Activated B cell treated with CpG ODN at 0.5 μM for 24 hours (primary cell): ENCODE measurements at regions of chr14 and their contacts with region 1.

Region 1: DNA sequence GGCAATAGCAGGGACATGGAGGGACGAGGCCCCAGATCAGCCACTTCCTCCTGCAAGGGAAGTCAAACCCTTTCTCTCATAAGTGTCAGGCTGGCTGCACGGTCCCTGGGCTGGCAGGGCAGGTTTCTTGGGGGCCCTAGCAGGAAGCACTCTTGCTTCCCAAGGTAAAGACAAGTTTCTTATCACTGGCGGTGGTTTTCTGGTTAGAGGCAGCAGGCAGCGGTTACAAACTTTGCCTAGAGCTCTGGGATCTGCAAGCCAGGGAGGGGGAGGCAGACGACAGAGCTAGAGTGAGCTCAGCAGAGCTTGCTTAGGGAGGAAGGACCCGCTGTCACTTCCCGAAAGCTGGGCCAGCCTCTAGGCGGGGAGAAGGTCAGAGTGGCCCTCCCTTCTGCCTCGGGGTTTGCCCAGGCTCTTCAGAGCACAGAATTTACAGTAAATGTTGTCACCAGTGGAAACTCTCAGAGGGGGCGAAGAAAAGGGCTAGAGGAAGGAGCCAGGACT is 20.4 kb downstream of the BATF start:
- DNase-seq: peak; percentile 65
- ATAC-seq: peak; percentile 80
- H3K4me3 Mint-ChIP-seq: peak overlapping the region; percentile 74
- H3K27ac Mint-ChIP-seq: peak overlapping the region; percentile 99
- H3K4me1 Mint-ChIP-seq: peaks cover 78% of the 10 kb centered on the region
- H3K27me3 Mint-ChIP-seq: no peaks in the 10 kb centered on the region
- CTCF ChIP-seq: no peak

Region 2: DNA sequence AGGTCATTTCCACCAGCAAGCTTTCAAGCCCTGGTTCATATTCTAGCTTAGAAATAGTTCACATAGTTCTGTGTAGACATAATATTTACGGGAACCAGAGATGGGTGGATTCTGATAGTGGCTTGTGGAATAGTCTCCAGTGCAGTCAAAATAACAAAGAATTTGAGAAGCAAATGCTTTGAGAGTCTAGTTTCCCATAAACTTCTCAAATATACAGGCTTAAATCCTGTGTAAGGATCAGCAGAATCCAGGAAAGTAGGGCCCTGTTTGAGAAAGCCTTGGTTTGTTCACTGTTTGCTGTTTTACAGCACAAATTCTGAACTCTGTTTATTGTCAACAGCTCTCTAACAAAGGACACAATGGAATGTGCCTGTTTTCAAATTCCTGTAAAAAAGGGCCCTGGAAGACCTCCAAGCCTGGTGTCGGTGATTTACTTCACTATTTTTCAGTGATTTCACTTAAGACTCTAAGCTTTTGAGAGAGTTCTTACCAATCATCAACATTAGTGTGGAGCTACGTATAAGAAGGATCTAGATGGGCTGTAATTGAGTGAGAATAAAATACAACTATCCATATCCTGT is 275.4 kb before region 1 on chr14:
- CTCF ChIA-PET with region 1: no interaction called
- POLR2A ChIA-PET with region 1: interaction called, 14 read pairs
- intact Hi-C with region 1: no loop called
- DNase-seq: no peak
- ATAC-seq: no peak
- H3K4me3 Mint-ChIP-seq: no peak overlapping the region
- H3K27ac Mint-ChIP-seq: no peak overlapping the region
- H3K4me1 Mint-ChIP-seq: peaks cover 3% of the 10 kb centered on the region
- H3K27me3 Mint-ChIP-seq: peaks cover 4% of the 10 kb centered on the region
- CTCF ChIP-seq: no peak

Region 3: DNA sequence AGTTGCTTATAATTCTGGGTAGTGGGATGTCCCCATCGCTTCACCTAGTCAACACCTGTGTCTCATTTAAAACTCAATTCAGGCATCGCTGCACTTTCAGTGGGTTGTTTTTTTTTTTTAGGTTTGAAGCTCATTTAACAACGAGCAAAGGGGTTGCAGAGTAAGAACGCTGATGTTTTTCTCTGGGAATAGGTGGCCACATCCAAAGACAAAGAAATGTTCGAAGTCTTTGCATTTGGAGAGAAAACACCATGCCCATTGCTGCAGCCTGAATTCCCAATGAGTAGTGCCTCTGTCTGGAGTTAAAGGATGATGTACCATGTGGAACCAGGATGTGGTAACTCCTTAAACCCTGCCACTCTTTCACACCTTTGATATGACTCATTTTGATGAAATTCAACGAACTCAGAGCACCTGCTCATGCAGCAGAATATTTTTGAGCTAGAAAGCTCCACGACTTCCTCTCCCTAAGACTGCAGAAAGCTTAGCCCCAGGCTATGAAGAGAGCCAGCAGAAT is 55.4 kb before region 1 on chr14:
- CTCF ChIA-PET with region 1: interaction called, 12 read pairs
- POLR2A ChIA-PET with region 1: interaction called, 8 read pairs
- intact Hi-C with region 1: loop called (anchors 2 kb)
- DNase-seq: no peak
- ATAC-seq: peak; percentile 66
- H3K4me3 Mint-ChIP-seq: peak overlapping the region; percentile 9
- H3K27ac Mint-ChIP-seq: peak overlapping the region; percentile 42
- H3K4me1 Mint-ChIP-seq: peaks cover 22% of the 10 kb centered on the region
- H3K27me3 Mint-ChIP-seq: no peaks in the 10 kb centered on the region
- CTCF ChIP-seq: no peak

Region 4: GRCh38 chr14:75504411-75504810 is 38.2 kb before region 1 on chr14:
- CTCF ChIA-PET with region 1: no interaction called
- POLR2A ChIA-PET with region 1: no interaction called
- intact Hi-C with region 1: no loop called
- DNase-seq: no peak
- ATAC-seq: no peak
- H3K4me3 Mint-ChIP-seq: no peak overlapping the region
- H3K27ac Mint-ChIP-seq: no peak overlapping the region
- H3K4me1 Mint-ChIP-seq: peaks cover 3% of the 10 kb centered on the region
- H3K27me3 Mint-ChIP-seq: no peaks in the 10 kb centered on the region
- CTCF ChIP-seq: no peak

Region 5: GRCh38 chr14:75522224-75522982 is 20.2 kb before region 1 on chr14 and contains the start of gene BATF:
- CTCF ChIA-PET with region 1: interaction called, 8 read pairs
- POLR2A ChIA-PET with region 1: interaction called, 356 read pairs
- intact Hi-C with region 1: loop called (anchors 1 kb)
- DNase-seq: peak; percentile 58
- ATAC-seq: peak; percentile 70
- H3K4me3 Mint-ChIP-seq: peak within 1 kb of the TSS; percentile 100
- H3K27ac Mint-ChIP-seq: peak within 1 kb of the TSS; percentile 98
- H3K4me1 Mint-ChIP-seq: peaks cover 85% of the 10 kb centered on the region
- H3K27me3 Mint-ChIP-seq: no peaks in the 10 kb centered on the region
- CTCF ChIP-seq: no peak
- total RNA-seq, gene BATF: 160 and 171 TPM in 2 replicates

Region 6: DNA sequence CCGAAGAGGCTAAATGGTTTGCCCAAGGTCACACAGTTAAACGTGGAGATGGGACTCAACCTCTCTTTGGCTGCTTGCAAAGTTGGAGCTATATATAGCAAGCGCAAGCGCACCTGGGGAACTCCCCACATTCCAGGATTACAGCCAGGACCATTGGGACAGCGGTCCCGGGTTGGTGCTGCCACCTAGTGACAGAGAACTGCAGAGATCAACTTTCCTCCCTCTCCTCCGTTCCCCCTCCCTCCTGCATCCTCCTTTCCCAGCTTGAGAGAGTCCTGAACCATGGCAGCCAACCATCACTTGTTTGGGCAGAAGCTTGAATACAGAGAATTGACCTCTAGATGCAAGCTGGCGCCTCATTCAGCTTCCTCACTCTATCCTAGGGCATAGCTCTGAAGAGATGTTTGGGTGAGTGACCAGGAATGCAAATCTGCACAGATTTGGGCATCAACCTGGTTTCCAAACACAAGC is 18.4 kb after region 1 on chr14:
- CTCF ChIA-PET with region 1: interaction called, 23 read pairs
- POLR2A ChIA-PET with region 1: interaction called, 10 read pairs
- intact Hi-C with region 1: loop called (anchors 1 kb)
- DNase-seq: no peak
- ATAC-seq: peak; percentile 46
- H3K4me3 Mint-ChIP-seq: peak overlapping the region; percentile 42
- H3K27ac Mint-ChIP-seq: peak overlapping the region; percentile 41
- H3K4me1 Mint-ChIP-seq: peaks cover 37% of the 10 kb centered on the region
- H3K27me3 Mint-ChIP-seq: no peaks in the 10 kb centered on the region
- CTCF ChIP-seq: peak; percentile 40

Region 7: GRCh38 chr14:77033622-77034521 is 1491.2 kb after region 1 on chr14:
- CTCF ChIA-PET with region 1: no interaction called
- POLR2A ChIA-PET with region 1: no interaction called
- intact Hi-C with region 1: loop called (anchors 10 kb)
- DNase-seq: peak; percentile 74
- ATAC-seq: peak; percentile 82
- H3K4me3 Mint-ChIP-seq: peak overlapping the region; percentile 88
- H3K27ac Mint-ChIP-seq: peak overlapping the region; percentile 97
- H3K4me1 Mint-ChIP-seq: peaks cover 67% of the 10 kb centered on the region
- H3K27me3 Mint-ChIP-seq: no peaks in the 10 kb centered on the region
- CTCF ChIP-seq: no peak